HepG2 (cell line): ENCODE measurements at regions of chr9 and their contacts with region 1.

Region 1: DNA sequence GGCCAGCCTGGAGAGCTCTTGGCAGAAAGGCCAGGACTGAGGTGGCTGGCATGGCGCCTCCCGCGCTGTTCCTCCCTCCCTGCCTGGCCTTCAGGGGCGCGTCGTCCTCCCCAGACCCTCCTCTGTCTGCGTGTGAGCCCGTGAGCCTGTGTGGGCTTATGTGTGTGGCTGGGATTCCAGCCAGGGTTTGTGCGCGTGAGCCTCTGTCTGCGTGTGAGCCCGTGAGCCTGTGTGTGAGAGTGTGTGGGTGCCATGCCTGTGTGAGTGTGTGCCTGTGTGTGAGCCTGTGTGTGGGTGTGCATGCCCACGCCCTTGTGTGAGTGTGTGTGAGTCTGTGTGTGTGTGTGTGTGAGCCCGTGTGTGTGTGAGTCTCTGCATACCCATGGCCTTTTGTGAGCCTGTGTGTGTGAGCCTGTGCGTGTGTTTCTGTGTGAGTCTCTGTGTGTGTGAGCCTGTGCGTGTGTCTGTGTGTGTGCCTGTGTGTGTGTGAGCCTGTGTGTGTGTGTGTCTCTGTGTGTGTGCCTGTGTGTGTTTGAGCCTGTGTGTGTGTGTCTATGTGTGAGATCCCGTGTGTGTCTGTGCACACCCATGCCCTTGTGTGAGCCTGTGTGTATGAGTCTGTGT is 13.0 kb downstream of the RXRA start:
- DNase-seq: no peak
- ATAC-seq: no peak
- H3K4me3 ChIP-seq: no peak overlapping the region
- H3K27ac ChIP-seq: peak overlapping the region; percentile 30
- H3K4me1 ChIP-seq: peaks cover 57% of the 10 kb centered on the region
- H3K27me3 ChIP-seq: no peaks in the 10 kb centered on the region
- CTCF ChIP-seq: no peak
- EP300 ChIP-seq: no peak
- POLR2A ChIP-seq: no peak
- RAD21 ChIP-seq: no peak

Region 2: GRCh38 chr9:134365791-134366688 is 26.7 kb after region 1 on chr9:
- CTCF ChIA-PET with region 1: no interaction called
- POLR2A ChIA-PET with region 1: interaction called, 4 read pairs
- in situ Hi-C with region 1: no loop called
- intact Hi-C with region 1: loop called (anchors 1 kb)
- DNase-seq: no peak
- ATAC-seq: no peak
- H3K4me3 ChIP-seq: no peak overlapping the region
- H3K27ac ChIP-seq: peak overlapping the region; percentile 74
- H3K4me1 ChIP-seq: peaks cover 73% of the 10 kb centered on the region
- H3K27me3 ChIP-seq: no peaks in the 10 kb centered on the region
- CTCF ChIP-seq: no peak
- EP300 ChIP-seq: no peak
- POLR2A ChIP-seq: no peak
- RAD21 ChIP-seq: no peak

Region 3: GRCh38 chr9:134413890-134414731 is 74.8 kb after region 1 on chr9:
- CTCF ChIA-PET with region 1: no interaction called
- POLR2A ChIA-PET with region 1: no interaction called
- in situ Hi-C with region 1: no loop called
- intact Hi-C with region 1: no loop called
- DNase-seq: no peak
- ATAC-seq: no peak
- H3K4me3 ChIP-seq: no peak overlapping the region
- H3K27ac ChIP-seq: no peak overlapping the region
- H3K4me1 ChIP-seq: no peaks in the 10 kb centered on the region
- H3K27me3 ChIP-seq: no peaks in the 10 kb centered on the region
- CTCF ChIP-seq: no peak
- EP300 ChIP-seq: no peak
- POLR2A ChIP-seq: no peak
- RAD21 ChIP-seq: no peak